ENCODE measurements at regions of chr14 and their contacts with region 1.

Region 1: GRCh38 chr14:76918751-76919543 is 92.7 kb downstream of the LRRC74A start:
- DNase-seq: peak; percentile 73
- ATAC-seq: peak; percentile 75
- H3K4me3 ChIP-seq: peak overlapping the region; percentile 4 to 30; a peak in 2 of 4 replicates
- H3K27ac ChIP-seq: peak overlapping the region; percentile 99
- H3K4me1 ChIP-seq: peaks cover 62 to 70% of the 10 kb centered on the region in 2 experiments
- H3K27me3 ChIP-seq: no peaks in the 10 kb centered on the region
- CTCF ChIP-seq: 0 out of 6 replicates have a peak, but pooled peaks of 1 of the 3 experiments have one; percentile 15
- POLR2A ChIP-seq: no peak
- RAD21 ChIP-seq: no peak

Region 2: DNA sequence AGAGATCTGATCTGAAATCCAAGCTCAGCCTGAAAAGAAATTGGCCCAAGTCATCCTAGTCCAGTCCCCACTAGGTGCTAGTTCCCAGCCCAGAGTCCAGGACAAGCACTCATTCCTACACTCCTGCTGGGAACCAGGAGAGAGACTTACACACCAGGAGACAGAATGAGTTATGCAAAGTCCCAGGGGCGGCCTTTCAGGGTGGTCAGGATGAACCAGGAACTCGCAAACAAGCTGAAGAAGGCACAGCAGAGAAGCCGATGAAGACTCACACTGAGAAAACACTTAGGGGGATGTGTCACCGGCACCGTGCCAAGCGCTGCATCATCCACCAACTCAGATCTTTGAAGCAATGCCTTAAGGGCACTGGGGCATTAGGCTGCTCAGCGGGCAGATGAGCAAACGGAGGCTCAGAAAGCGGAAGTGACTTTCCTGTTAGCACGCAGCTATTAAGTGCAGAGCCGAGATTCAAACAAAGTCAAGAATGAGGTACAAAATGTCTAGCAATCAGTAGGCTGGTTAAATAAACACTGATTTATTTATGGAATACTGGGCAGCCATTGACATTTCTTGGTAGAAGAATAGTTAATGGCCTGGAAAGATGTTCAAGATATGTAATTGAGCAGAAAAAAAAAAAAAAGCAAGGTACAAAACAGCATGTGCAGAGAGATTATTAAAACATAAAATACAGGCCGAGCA is 14.1 kb before region 1 on chr14:
- CTCF ChIA-PET with region 1: interaction called, 11 read pairs
- POLR2A ChIA-PET with region 1: interaction called, 12 read pairs
- RAD21 ChIA-PET with region 1: no interaction called
- intact Hi-C with region 1: no loop called
- DNase-seq: peak; percentile 87
- ATAC-seq: peak; percentile 85
- H3K4me3 ChIP-seq: peak overlapping the region; percentile 9 to 49; a peak in 2 of 4 replicates
- H3K27ac ChIP-seq: peak overlapping the region; percentile 81
- H3K4me1 ChIP-seq: peaks cover 45 to 55% of the 10 kb centered on the region in 2 experiments
- H3K27me3 ChIP-seq: no peaks in the 10 kb centered on the region
- CTCF ChIP-seq: no peak
- POLR2A ChIP-seq: no peak
- RAD21 ChIP-seq: peak; percentile 6; the same call in 1 of the 2 replicates

Region 3: GRCh38 chr14:76956316-76957090 is 37.6 kb after region 1 on chr14:
- CTCF ChIA-PET with region 1: interaction called, 11 read pairs
- POLR2A ChIA-PET with region 1: interaction called, 20 read pairs
- RAD21 ChIA-PET with region 1: interaction called, 6 to 10 read pairs
- intact Hi-C with region 1: loop called (anchors 1 kb)
- DNase-seq: peak; percentile 82
- ATAC-seq: peak; percentile 45
- H3K4me3 ChIP-seq: peak overlapping the region; percentile 30 to 52
- H3K27ac ChIP-seq: peak overlapping the region; percentile 100
- H3K4me1 ChIP-seq: peaks cover 95 to 99% of the 10 kb centered on the region in 2 experiments
- H3K27me3 ChIP-seq: no peaks in the 10 kb centered on the region
- CTCF ChIP-seq: 0 out of 6 replicates have a peak, but pooled peaks of 1 of the 3 experiments have one; percentile 7
- POLR2A ChIP-seq: no peak
- RAD21 ChIP-seq: no peak

Region 4: GRCh38 chr14:77028384-77029231 is 109.7 kb after region 1 on chr14 and contains the start of gene IRF2BPL:
- CTCF ChIA-PET with region 1: interaction called, 5 read pairs
- POLR2A ChIA-PET with region 1: interaction called, 7 read pairs
- RAD21 ChIA-PET with region 1: interaction called, 5 to 8 read pairs
- intact Hi-C with region 1: loop called (anchors 10 kb)
- DNase-seq: peak; percentile 91
- ATAC-seq: peak; percentile 81
- H3K4me3 ChIP-seq: peak within 1 kb of the TSS; percentile 61 to 89
- H3K27ac ChIP-seq: peak within 1 kb of the TSS; percentile 100
- H3K4me1 ChIP-seq: peaks cover 70 to 73% of the 10 kb centered on the region in 2 experiments
- H3K27me3 ChIP-seq: no peaks in the 10 kb centered on the region
- CTCF ChIP-seq: no peak
- POLR2A ChIP-seq: peak; percentile 92
- RAD21 ChIP-seq: no peak
- total RNA-seq, gene IRF2BPL: 74.6 TPM

Region 5: DNA sequence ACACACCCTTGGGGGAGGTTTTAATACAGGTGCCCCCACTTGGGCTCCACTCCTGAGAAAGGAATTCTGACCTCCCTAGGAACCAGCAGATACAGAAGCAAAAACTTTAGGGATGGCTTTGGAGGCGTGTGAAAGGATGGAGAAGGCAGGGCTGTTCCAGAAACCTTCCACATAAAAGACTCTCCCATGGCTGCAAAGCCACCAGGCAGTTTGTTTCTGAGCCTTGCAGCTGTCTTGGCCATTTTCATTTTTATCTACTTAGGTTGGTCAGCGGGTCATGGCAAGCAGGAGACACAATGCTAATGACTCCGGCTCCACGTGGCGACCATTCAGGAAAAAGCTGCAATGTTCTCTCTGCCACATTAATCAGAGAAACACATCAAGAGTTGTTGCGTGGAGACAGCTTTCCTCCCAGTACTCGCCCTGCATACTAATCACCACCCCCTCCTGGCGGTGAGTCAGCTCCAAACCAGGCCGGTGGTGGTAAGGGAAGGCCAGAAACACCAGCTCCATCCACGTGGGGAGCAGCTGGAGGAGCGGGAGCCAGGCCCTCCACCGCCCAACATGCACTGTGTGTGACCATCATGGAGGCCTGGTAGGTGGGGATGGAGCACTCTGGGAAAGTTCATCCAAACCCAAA is 140.4 kb after region 1 on chr14:
- CTCF ChIA-PET with region 1: interaction called, 18 read pairs
- POLR2A ChIA-PET with region 1: interaction called, 4 read pairs
- RAD21 ChIA-PET with region 1: interaction called, 3 to 5 read pairs
- intact Hi-C with region 1: no loop called
- DNase-seq: peak; percentile 67
- ATAC-seq: peak; percentile 98
- H3K4me3 ChIP-seq: no peak overlapping the region
- H3K27ac ChIP-seq: peak overlapping the region; percentile 40; the same call in 1 of the 2 replicates
- H3K4me1 ChIP-seq: peaks cover 15 to 31% of the 10 kb centered on the region in 2 experiments
- H3K27me3 ChIP-seq: no peaks in the 10 kb centered on the region
- CTCF ChIP-seq: peak in 2 of 3 experiments; percentile 34 to 37; a peak in 4 of 6 replicates
- POLR2A ChIP-seq: no peak
- RAD21 ChIP-seq: no peak